ENCODE measurements at regions of chr12 and their contacts with region 1.

Region 1: GRCh38 chr12:7806863-7807487 is 17.8 kb downstream of the NANOG start:
- DNase-seq: peak; percentile 88 to 95
- H3K4me3 ChIP-seq: no peak overlapping the region
- H3K4me3 Mint-ChIP-seq: no peak overlapping the region
- H3K27ac Mint-ChIP-seq: peak overlapping the region; percentile 73
- H3K4me1 ChIP-seq: peaks cover 7% of the 10 kb centered on the region
- H3K4me1 Mint-ChIP-seq: peaks cover 21% of the 10 kb centered on the region
- H3K27me3 ChIP-seq: no peaks in the 10 kb centered on the region
- H3K27me3 Mint-ChIP-seq: no peaks in the 10 kb centered on the region
- CTCF ChIP-seq: peak; percentile 98 to 99

Region 2: DNA sequence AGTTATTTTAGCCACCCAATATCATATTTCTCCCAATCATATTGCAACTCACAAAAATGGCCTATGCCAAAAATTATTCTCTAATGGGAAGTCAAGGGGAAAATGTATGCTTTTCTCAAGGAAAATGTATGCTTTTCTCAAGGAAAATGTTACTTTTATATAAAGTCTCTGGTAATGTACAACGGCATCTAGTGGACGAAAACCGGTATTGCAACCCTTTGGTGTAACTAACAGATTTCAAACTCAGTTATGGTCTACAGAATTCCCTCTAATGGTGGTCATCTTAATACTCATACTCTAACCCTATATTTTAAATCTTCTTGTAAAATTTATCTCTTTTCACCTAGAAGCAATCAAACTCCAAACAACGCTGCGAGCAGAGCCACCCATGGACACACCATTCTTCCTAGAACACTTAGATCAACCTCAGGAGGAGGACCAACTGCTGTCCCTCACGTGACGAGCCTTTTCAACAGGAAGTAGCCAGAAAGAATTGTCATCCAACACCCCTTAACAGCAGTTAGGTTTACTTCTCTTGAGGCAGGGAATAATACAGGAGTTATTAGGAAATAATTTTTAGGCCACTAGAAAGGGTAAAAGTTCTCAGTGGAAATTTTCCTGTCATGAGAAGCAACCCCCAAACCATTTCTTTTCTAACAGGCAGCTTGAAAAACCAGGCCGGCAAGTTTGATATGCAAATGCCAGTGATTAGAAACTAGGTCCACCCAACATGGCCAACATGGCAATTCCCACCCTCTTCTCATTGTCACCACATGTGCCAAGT is 161.4 kb before region 1 on chr12:
- CTCF ChIA-PET with region 1: interaction called, 11 read pairs
- POLR2A ChIA-PET with region 1: no interaction called
- intact Hi-C with region 1: loop called (anchors 1 kb)
- DNase-seq: peak in 1 of 2 experiments; percentile 48
- H3K4me3 ChIP-seq: no peak overlapping the region
- H3K4me3 Mint-ChIP-seq: no peak overlapping the region
- H3K27ac Mint-ChIP-seq: no peak overlapping the region
- H3K4me1 ChIP-seq: peaks cover 35% of the 10 kb centered on the region
- H3K4me1 Mint-ChIP-seq: peaks cover 37% of the 10 kb centered on the region
- H3K27me3 ChIP-seq: no peaks in the 10 kb centered on the region
- H3K27me3 Mint-ChIP-seq: no peaks in the 10 kb centered on the region
- CTCF ChIP-seq: peak; percentile 91 to 94

Region 3: DNA sequence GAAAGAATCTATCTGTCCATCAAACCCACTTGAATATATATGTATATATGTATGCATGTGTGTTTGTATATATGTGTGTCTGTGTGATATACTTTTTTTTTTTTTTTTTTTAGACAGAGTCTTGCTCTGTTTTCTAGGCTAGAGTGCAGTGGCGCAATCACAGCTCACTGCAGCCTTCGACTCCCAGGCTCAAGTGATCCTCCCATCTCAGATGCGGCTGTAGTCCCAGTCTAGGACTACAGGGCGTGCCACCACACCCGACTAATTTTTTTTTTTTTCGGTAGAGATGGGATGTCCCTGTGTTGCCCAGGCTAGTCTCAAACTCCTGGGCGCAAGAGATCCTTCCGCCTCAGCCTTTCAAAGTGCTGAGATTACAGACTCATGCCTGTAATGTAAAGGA is 128.2 kb before region 1 on chr12:
- CTCF ChIA-PET with region 1: interaction called, 17 read pairs
- POLR2A ChIA-PET with region 1: no interaction called
- intact Hi-C with region 1: loop called (anchors 1 kb)
- DNase-seq: peak; percentile 67 to 68
- H3K4me3 ChIP-seq: no peak overlapping the region
- H3K4me3 Mint-ChIP-seq: no peak overlapping the region
- H3K27ac Mint-ChIP-seq: peak overlapping the region; percentile 11
- H3K4me1 ChIP-seq: peaks cover 30% of the 10 kb centered on the region
- H3K4me1 Mint-ChIP-seq: peaks cover 23% of the 10 kb centered on the region
- H3K27me3 ChIP-seq: no peaks in the 10 kb centered on the region
- H3K27me3 Mint-ChIP-seq: no peaks in the 10 kb centered on the region
- CTCF ChIP-seq: peak in 1 of 2 experiments; percentile 43

Region 4: GRCh38 chr12:7716381-7716780 is 90.6 kb before region 1 on chr12:
- CTCF ChIA-PET with region 1: interaction called, 12 read pairs
- POLR2A ChIA-PET with region 1: no interaction called
- intact Hi-C with region 1: loop called (anchors 1 kb)
- DNase-seq: peak in 1 of 2 experiments; percentile 62
- H3K4me3 ChIP-seq: no peak overlapping the region
- H3K4me3 Mint-ChIP-seq: no peak overlapping the region
- H3K27ac Mint-ChIP-seq: peak overlapping the region; percentile 54
- H3K4me1 ChIP-seq: peaks cover 10% of the 10 kb centered on the region
- H3K4me1 Mint-ChIP-seq: peaks cover 27% of the 10 kb centered on the region
- H3K27me3 ChIP-seq: no peaks in the 10 kb centered on the region
- H3K27me3 Mint-ChIP-seq: no peaks in the 10 kb centered on the region
- CTCF ChIP-seq: peak; percentile 45 to 72

Region 5: GRCh38 chr12:7844116-7844515 is 37.1 kb after region 1 on chr12:
- CTCF ChIA-PET with region 1: no interaction called
- POLR2A ChIA-PET with region 1: no interaction called
- intact Hi-C with region 1: no loop called
- DNase-seq: no peak
- H3K4me3 ChIP-seq: no peak overlapping the region
- H3K4me3 Mint-ChIP-seq: peak overlapping the region; percentile 70
- H3K27ac Mint-ChIP-seq: peak overlapping the region; percentile 24
- H3K4me1 ChIP-seq: peaks cover 59% of the 10 kb centered on the region
- H3K4me1 Mint-ChIP-seq: peaks cover 30% of the 10 kb centered on the region
- H3K27me3 ChIP-seq: no peaks in the 10 kb centered on the region
- H3K27me3 Mint-ChIP-seq: no peaks in the 10 kb centered on the region
- CTCF ChIP-seq: no peak

Region 6: DNA sequence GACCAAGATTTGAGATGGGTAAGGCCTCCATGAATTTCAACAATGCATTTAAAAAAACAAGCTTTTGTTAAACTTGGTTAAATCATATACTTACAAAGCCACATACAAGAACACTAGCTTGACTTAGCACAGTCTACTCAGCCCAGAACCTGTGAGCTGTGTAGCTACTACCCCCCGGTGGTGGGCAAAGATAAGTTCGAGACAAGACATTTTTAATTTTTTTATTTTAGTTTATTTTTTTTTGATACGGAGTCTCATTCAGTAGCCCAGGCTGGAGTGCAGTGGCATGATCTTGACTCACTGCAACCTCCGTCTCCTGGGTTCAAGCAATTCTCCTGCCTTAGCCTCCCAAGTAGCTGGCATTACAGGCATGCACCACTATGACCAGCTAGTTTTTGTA is 271.4 kb after region 1 on chr12:
- CTCF ChIA-PET with region 1: interaction called, 4 read pairs
- POLR2A ChIA-PET with region 1: no interaction called
- intact Hi-C with region 1: loop called (anchors 5 kb)
- DNase-seq: peak; percentile 63 to 74
- H3K4me3 ChIP-seq: no peak overlapping the region
- H3K4me3 Mint-ChIP-seq: no peak overlapping the region
- H3K27ac Mint-ChIP-seq: no peak overlapping the region
- H3K4me1 ChIP-seq: 0 out of 2 replicates have a peak, but pooled peaks cover 4% of the 10 kb centered on the region
- H3K4me1 Mint-ChIP-seq: peaks cover 14% of the 10 kb centered on the region
- H3K27me3 ChIP-seq: no peaks in the 10 kb centered on the region
- H3K27me3 Mint-ChIP-seq: no peaks in the 10 kb centered on the region
- CTCF ChIP-seq: peak; percentile 60 to 64